A549 (cell line): ENCODE measurements at regions of chr5 and their contacts with region 1.

Region 1: DNA sequence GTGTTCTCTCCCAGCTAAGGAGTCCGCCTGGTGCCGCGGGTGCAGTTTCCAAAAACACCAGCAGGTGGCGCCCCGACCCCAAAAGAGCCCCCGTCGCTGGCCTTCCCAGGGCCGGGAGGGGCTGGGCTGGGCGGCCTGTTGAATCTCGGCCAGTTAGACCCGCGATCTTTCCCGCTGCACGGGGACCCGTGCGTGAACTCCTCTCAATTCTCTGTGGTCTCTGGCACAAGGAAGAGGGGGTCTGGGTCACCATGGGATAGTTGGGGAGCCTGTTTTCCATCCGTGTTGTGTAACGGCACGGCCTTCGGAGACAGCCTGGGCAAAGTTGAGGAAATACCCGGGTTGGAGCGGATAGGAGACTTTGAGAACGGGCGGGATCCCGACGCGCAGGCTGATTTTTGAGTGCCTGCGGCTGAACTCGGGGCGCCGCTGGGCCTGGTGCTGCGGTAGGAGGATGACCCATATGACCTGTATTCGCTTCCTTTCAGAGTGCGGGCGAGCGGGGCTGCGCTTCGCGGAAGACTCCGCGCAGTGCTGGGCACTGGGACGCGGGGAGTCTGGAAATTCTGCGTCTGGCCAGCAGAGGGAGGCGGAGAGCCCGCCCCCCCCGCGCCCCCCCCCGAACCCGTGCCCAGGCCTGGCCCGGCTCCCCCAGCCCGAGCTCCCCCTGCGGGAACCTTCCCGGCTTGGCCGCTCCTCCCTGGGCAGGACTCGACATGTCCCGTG is 7.9 kb upstream of the PSD2 start:
- DNase-seq: peak; percentile 76 to 97
- ATAC-seq: peak; percentile 65 to 90
- H3K4me3 ChIP-seq: peak overlapping the region; percentile 63
- H3K27ac ChIP-seq: peak overlapping the region; percentile 81
- H3K4me1 ChIP-seq: 0 out of 3 replicates have a peak, but pooled peaks cover 4% of the 10 kb centered on the region
- CTCF ChIP-seq: peak; percentile 87
- EP300 ChIP-seq: no peak
- POLR2A ChIP-seq: no peak
- RAD21 ChIP-seq: peak; percentile 95 to 98

Region 2: DNA sequence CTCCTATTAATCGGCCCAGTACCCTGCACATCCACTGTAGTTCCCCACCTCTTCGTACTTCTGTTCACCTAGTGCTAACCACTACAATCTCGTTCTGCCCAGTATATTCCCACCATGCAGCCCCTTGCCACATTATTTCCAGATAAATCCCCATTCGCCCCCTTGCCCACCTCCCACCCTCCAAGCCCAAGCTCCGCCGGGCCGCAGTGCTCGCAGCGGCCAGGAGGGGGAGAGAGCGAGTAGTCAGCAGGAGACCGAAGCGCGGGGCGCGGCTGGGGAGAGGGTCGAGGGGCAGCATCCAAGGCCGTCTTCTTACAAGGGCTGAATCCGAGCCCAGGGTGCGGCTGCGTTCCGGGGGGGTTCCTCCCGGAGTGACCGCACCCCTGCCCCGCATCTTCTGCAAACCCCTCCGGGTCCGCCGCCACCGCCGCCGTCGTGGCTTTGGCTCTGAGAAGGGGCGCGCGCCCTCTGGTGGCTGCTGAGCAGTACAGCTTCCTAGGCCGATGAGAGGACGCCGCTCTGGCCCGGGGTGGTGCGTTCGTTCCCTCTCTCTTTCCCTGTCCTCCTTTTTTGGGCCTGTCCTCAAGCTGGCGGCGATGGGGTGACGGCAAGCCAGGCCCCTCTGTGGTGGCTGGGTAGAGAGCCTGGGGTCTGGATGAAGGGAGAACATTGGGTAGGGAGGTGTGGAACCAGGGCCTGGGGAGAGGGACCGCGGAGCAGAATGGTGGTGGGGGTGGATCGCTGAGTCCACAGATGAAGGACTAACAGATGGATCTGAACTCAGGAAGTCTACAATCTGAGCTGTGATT is 22.1 kb before region 1 on chr5:
- CTCF ChIA-PET with region 1: interaction called, 17 read pairs
- POLR2A ChIA-PET with region 1: no interaction called
- DNase-seq: peak; percentile 74 to 76
- ATAC-seq: peak; percentile 79 to 93
- H3K4me3 ChIP-seq: peak overlapping the region; percentile 51
- H3K27ac ChIP-seq: peak overlapping the region; percentile 80 to 92
- H3K4me1 ChIP-seq: no peaks in the 10 kb centered on the region
- CTCF ChIP-seq: peak; percentile 99
- EP300 ChIP-seq: no peak
- POLR2A ChIP-seq: no peak
- RAD21 ChIP-seq: peak; percentile 78 to 94

Region 3: GRCh38 chr5:139806726-139807646 is 19.3 kb after region 1 on chr5:
- CTCF ChIA-PET with region 1: interaction called, 26 read pairs
- POLR2A ChIA-PET with region 1: no interaction called
- DNase-seq: no peak
- ATAC-seq: 0 out of 6 replicates have a peak, but pooled peaks of 1 of the 2 experiments have one; percentile 10
- H3K4me3 ChIP-seq: no peak overlapping the region
- H3K27ac ChIP-seq: no peak overlapping the region
- H3K4me1 ChIP-seq: no peaks in the 10 kb centered on the region
- CTCF ChIP-seq: no peak
- EP300 ChIP-seq: no peak
- POLR2A ChIP-seq: no peak
- RAD21 ChIP-seq: no peak

Region 4: DNA sequence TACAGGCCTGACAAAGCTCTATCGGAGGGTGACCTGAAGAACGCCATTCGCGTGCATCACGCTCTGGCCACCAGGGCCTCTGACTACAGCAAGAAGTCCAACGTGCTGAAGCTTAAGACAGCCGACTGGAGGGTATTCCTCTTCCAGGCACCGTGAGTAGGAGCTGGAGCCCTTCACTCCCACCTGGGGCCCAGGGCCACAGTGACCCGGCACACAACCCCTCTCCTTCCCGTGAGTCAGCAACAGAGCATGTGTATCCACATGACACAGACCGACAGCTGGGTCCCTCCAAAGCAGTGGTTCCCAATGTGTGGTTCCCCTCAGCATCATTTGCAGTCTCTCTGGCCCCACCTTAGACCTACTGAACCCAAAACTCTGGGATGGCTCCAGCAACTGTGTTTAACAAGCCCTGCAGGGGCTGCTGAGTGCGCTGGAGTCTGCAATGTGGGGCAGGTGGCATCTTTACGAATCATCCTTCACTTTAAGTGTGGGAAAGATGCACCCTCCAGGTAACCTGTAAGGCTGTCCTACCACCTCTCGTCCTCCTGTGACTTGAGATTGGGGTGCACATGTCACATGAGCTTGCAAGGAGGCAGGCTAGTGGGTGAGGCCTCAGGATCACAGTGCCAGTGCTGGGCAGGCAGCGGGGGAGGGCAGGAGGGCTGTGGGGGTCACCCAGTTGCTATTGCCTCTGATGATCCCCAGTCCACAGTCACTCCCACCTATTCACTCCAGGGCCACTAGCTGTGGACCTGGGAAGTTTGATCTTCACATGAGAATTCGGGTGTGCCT is 50.1 kb after region 1 on chr5:
- CTCF ChIA-PET with region 1: interaction called, 193 read pairs
- POLR2A ChIA-PET with region 1: no interaction called
- DNase-seq: no peak
- ATAC-seq: no peak; a peak in 1 of 6 replicates
- H3K4me3 ChIP-seq: no peak overlapping the region
- H3K27ac ChIP-seq: no peak overlapping the region
- H3K4me1 ChIP-seq: no peaks in the 10 kb centered on the region
- CTCF ChIP-seq: no peak
- EP300 ChIP-seq: no peak
- POLR2A ChIP-seq: no peak
- RAD21 ChIP-seq: no peak

Region 5: GRCh38 chr5:139856714-139857113 is 69.0 kb after region 1 on chr5:
- CTCF ChIA-PET with region 1: interaction called, 193 read pairs
- POLR2A ChIA-PET with region 1: no interaction called
- DNase-seq: no peak
- ATAC-seq: no peak
- H3K4me3 ChIP-seq: no peak overlapping the region
- H3K27ac ChIP-seq: no peak overlapping the region
- H3K4me1 ChIP-seq: no peaks in the 10 kb centered on the region
- CTCF ChIP-seq: no peak
- EP300 ChIP-seq: no peak
- POLR2A ChIP-seq: no peak
- RAD21 ChIP-seq: no peak

Region 6: GRCh38 chr5:139872052-139872766 is 84.5 kb after region 1 on chr5:
- CTCF ChIA-PET with region 1: interaction called, 161 read pairs
- POLR2A ChIA-PET with region 1: no interaction called
- DNase-seq: no peak
- ATAC-seq: peak in 1 of 2 experiments; percentile 43; a peak in 2 of 6 replicates
- H3K4me3 ChIP-seq: no peak overlapping the region
- H3K27ac ChIP-seq: no peak overlapping the region
- H3K4me1 ChIP-seq: 0 out of 3 replicates have a peak, but pooled peaks cover 3% of the 10 kb centered on the region
- CTCF ChIP-seq: no peak
- EP300 ChIP-seq: no peak
- POLR2A ChIP-seq: no peak
- RAD21 ChIP-seq: no peak

Region 7: GRCh38 chr5:140145818-140146522 is 358.2 kb after region 1 on chr5:
- CTCF ChIA-PET with region 1: interaction called, 22 read pairs
- POLR2A ChIA-PET with region 1: no interaction called
- DNase-seq: peak; percentile 51 to 68
- ATAC-seq: peak; percentile 89 to 92
- H3K4me3 ChIP-seq: peak overlapping the region; percentile 31
- H3K27ac ChIP-seq: peak overlapping the region in 1 of 2 experiments; percentile 48; a peak in 2 of 6 replicates
- H3K4me1 ChIP-seq: peaks cover 5% of the 10 kb centered on the region; the same call in 2 of the 3 replicates
- CTCF ChIP-seq: peak; percentile 52
- EP300 ChIP-seq: no peak
- POLR2A ChIP-seq: no peak
- RAD21 ChIP-seq: peak in 1 of 2 experiments; percentile 5; a peak in 2 of 5 replicates